CD8-positive, alpha-beta T cell (primary cell): ENCODE measurements at regions of chr1 and their contacts with region 1.

Region 1: GRCh38 chr1:59947047-59947938 is 20.7 kb upstream of the CYP2J2 start:
- DNase-seq: peak; percentile 10 to 73 (median 47)
- ATAC-seq: peak; percentile 84
- H3K4me3 ChIP-seq: no peak overlapping the region
- H3K4me3 Mint-ChIP-seq: no peak overlapping the region
- H3K27ac ChIP-seq: no peak overlapping the region
- H3K27ac Mint-ChIP-seq: no peak overlapping the region
- H3K4me1 ChIP-seq: no peaks in the 10 kb centered on the region
- H3K4me1 Mint-ChIP-seq: no peaks in the 10 kb centered on the region
- H3K27me3 ChIP-seq: no peaks in the 10 kb centered on the region
- H3K27me3 Mint-ChIP-seq: peaks cover 3% of the 10 kb centered on the region
- CTCF ChIP-seq: peak; percentile 83

Region 2: GRCh38 chr1:59776960-59777852 is 170.1 kb before region 1 on chr1:
- CTCF ChIA-PET with region 1: no interaction called
- POLR2A ChIA-PET with region 1: no interaction called
- intact Hi-C with region 1: loop called (anchors 1 to 10 kb)
- DNase-seq: no peak
- ATAC-seq: no peak
- H3K4me3 ChIP-seq: no peak overlapping the region
- H3K4me3 Mint-ChIP-seq: no peak overlapping the region
- H3K27ac ChIP-seq: no peak overlapping the region
- H3K27ac Mint-ChIP-seq: no peak overlapping the region
- H3K4me1 ChIP-seq: no peaks in the 10 kb centered on the region
- H3K4me1 Mint-ChIP-seq: no peaks in the 10 kb centered on the region
- H3K27me3 ChIP-seq: no peaks in the 10 kb centered on the region
- H3K27me3 Mint-ChIP-seq: no peaks in the 10 kb centered on the region
- CTCF ChIP-seq: no peak

Region 3: DNA sequence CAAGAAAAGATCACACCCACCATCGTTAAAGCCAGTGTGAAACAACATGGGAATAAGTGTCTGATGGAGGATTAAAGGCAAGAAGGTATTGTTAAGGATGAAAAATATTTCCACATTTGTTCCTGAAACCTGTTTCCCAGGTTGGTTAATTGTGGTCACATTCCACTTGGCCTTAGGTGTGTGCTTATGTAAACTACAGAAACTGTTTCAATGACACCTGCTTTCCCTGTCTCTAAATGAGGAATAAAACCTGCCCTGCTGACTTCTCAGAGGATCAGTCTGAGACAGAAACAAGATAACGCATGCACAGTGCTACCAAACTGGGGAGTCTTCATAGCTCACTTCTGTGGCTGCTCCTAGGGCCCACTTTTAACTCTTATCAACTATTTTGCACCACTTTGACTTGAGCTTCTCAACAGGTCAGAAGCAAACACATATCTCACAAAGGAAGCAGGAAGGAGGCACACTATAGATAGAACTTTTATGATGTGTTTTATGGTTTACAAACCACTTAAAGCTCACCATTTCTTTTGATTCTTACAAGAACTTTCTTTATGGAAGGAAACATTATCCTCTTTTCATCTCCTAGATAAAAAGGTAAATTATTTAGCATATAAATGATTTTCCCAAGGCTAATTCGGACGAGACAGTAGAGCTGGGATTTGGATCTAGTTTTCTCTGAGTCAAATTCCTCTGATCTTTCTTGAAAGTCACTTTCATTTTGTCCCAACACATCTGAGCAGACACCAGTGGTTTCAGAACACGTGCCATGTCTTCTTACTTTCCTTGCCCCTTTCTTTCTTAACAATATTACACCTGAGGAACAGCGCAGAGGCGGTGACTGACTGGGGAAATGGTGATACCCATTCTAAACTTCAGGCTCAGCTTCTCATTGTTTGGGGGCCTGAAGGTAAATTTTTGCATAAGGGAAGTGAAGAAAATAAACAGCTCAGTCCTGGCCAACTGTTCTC is 54.2 kb before region 1 on chr1:
- CTCF ChIA-PET with region 1: interaction called, 14 read pairs
- POLR2A ChIA-PET with region 1: no interaction called
- intact Hi-C with region 1: no loop called
- DNase-seq: peak in 1 of 9 experiments; percentile 40
- ATAC-seq: peak; percentile 36
- H3K4me3 ChIP-seq: no peak overlapping the region
- H3K4me3 Mint-ChIP-seq: peak overlapping the region; percentile 54
- H3K27ac ChIP-seq: peak overlapping the region; percentile 19 to 37
- H3K27ac Mint-ChIP-seq: peak overlapping the region; percentile 81
- H3K4me1 ChIP-seq: peaks cover 25% of the 10 kb centered on the region
- H3K4me1 Mint-ChIP-seq: peaks cover 25% of the 10 kb centered on the region
- H3K27me3 ChIP-seq: no peaks in the 10 kb centered on the region
- H3K27me3 Mint-ChIP-seq: no peaks in the 10 kb centered on the region
- CTCF ChIP-seq: no peak

Region 4: GRCh38 chr1:59926381-59927123 is 20.7 kb before region 1 on chr1 and contains the start of gene CYP2J2:
- CTCF ChIA-PET with region 1: interaction called, 10 read pairs
- POLR2A ChIA-PET with region 1: no interaction called
- intact Hi-C with region 1: no loop called
- DNase-seq: peak; percentile 10 to 60 (median 32)
- ATAC-seq: peak; percentile 71
- H3K4me3 ChIP-seq: peak within 1 kb of the TSS; percentile 60 to 71
- H3K4me3 Mint-ChIP-seq: peak within 1 kb of the TSS; percentile 92
- H3K27ac ChIP-seq: peak within 1 kb of the TSS in 1 of 2 experiments; percentile 30
- H3K27ac Mint-ChIP-seq: peak within 1 kb of the TSS; percentile 47
- H3K4me1 ChIP-seq: peaks cover 6% of the 10 kb centered on the region
- H3K4me1 Mint-ChIP-seq: peaks cover 15% of the 10 kb centered on the region
- H3K27me3 ChIP-seq: peaks cover 0 to 3% of the 10 kb centered on the region in 2 experiments
- H3K27me3 Mint-ChIP-seq: peaks cover 19% of the 10 kb centered on the region
- CTCF ChIP-seq: no peak
- total RNA-seq, gene CYP2J2: 0.62 to 0.78 TPM

Region 5: GRCh38 chr1:60066001-60066400 is 118.7 kb after region 1 on chr1:
- CTCF ChIA-PET with region 1: no interaction called
- POLR2A ChIA-PET with region 1: no interaction called
- intact Hi-C with region 1: no loop called
- DNase-seq: no peak
- ATAC-seq: no peak
- H3K4me3 ChIP-seq: no peak overlapping the region
- H3K4me3 Mint-ChIP-seq: no peak overlapping the region
- H3K27ac ChIP-seq: no peak overlapping the region
- H3K27ac Mint-ChIP-seq: no peak overlapping the region
- H3K4me1 ChIP-seq: no peaks in the 10 kb centered on the region
- H3K4me1 Mint-ChIP-seq: no peaks in the 10 kb centered on the region
- H3K27me3 ChIP-seq: no peaks in the 10 kb centered on the region
- H3K27me3 Mint-ChIP-seq: peaks cover 8% of the 10 kb centered on the region
- CTCF ChIP-seq: no peak